WTC11 (cell line): ENCODE measurements at regions of chr6 and their contacts with region 1.

Region 1: DNA sequence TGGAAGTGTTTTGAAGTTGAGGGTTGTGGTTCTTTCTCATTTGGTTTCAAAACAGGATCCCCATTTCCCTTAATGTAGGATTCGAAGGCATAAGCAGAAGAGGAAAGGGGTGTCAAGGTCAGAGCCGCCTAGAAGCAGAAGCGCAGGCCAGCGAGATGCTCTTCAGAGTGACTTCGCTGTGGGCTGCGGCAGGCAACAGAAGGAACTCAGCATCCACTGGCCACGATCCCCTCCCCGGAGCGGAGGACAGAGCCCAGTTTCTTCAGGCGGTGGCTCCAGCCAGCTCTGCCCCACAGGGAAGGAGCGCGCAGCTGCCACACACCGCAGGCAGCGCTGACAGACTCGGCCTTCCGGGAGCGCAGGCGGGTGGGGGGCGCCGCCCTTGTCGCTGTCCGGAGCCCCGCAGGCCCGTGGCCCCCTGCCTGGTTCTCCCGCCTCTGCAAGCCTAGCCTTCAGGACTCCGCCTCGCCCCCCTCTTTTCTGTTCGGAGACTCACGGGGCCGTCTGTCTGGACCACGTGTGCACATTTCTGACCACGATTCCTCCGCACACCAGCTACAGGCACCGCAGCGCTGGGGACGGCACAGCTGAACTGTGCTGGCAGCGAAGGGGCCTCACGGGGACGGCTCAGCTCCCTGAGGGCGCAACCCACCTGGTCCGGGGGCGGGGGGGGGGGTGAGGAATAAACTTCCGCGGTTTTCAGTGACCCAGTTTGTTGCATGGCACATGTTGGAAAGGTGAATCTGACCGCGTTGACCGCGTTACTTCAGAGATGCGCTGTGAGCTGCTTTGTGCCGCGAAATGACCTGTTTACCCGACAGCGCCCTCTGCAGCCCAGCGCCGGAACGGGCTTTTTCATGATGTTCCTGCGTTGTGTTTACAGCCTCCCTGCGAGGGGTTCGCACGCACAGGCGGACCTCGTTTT is 26.1 kb downstream of the TTLL2 start:
- DNase-seq: peak; percentile 97
- ATAC-seq: peak; percentile 84
- H3K4me3 Mint-ChIP-seq: peak overlapping the region; percentile 67
- H3K27ac Mint-ChIP-seq: no peak overlapping the region
- H3K4me1 Mint-ChIP-seq: peaks cover 21% of the 10 kb centered on the region
- H3K27me3 Mint-ChIP-seq: peaks cover 50% of the 10 kb centered on the region
- CTCF ChIP-seq: peak; percentile 86

Region 2: DNA sequence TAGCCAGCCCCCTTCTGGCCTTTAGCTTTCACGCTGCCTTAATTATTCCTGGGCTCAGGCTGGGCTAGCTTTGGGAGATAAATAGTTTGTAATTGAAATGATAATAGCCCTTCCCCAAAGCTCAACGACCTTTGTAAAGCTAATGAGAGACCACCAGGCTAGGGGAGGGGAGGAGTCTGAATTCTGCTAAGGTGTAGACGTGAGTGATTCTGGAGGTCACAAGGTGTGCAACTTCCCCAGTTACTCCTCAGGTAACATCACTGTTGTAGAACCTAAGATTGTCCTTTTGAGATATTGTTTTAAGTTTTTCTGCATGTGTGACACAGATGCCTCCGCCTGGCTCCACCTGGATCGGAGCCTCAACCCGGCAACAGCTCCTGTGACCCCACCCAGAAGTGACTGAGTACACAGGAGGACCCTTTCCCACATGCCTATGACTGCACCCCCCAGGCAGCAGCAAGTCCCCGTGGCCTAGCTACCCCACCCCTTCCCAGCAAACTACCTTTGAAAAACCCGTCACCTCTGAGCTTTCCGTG is 187.4 kb before region 1 on chr6:
- CTCF ChIA-PET with region 1: interaction called, 10 read pairs
- POLR2A ChIA-PET with region 1: no interaction called
- DNase-seq: peak; percentile 63
- ATAC-seq: peak; percentile 92
- H3K4me3 Mint-ChIP-seq: peak overlapping the region; percentile 47
- H3K27ac Mint-ChIP-seq: peak overlapping the region; percentile 98
- H3K4me1 Mint-ChIP-seq: peaks cover 54% of the 10 kb centered on the region
- H3K27me3 Mint-ChIP-seq: no peaks in the 10 kb centered on the region
- CTCF ChIP-seq: no peak

Region 3: DNA sequence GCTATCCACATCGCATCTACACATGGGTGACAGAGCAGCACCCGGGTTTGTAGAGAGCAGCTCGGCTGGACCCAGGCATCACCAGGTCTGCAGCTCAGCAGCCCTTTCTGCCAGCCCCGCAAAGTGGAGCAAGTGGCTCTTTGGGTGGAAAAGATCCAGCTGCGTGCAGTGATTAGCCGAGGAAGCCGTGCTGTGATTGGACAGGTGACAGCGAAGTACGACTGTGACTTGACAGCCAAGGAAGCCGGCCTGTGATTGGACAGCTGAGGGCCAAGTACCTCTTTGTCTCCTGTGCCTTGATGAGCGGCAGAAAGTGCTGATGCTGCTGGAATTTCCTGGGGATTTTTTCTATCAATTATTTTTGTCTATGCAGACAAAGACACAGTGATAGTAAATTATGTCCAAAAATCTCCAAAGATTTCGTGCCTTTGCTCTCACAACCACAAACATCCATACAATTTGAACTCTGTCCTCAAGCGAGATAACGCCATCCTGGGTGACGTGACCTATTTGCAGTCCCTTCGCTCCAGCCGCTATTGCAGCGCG is 131.0 kb before region 1 on chr6:
- CTCF ChIA-PET with region 1: interaction called, 10 read pairs
- POLR2A ChIA-PET with region 1: no interaction called
- DNase-seq: no peak
- ATAC-seq: no peak
- H3K4me3 Mint-ChIP-seq: no peak overlapping the region
- H3K27ac Mint-ChIP-seq: no peak overlapping the region
- H3K4me1 Mint-ChIP-seq: peaks cover 43% of the 10 kb centered on the region
- H3K27me3 Mint-ChIP-seq: peaks cover 24% of the 10 kb centered on the region
- CTCF ChIP-seq: no peak

Region 4: DNA sequence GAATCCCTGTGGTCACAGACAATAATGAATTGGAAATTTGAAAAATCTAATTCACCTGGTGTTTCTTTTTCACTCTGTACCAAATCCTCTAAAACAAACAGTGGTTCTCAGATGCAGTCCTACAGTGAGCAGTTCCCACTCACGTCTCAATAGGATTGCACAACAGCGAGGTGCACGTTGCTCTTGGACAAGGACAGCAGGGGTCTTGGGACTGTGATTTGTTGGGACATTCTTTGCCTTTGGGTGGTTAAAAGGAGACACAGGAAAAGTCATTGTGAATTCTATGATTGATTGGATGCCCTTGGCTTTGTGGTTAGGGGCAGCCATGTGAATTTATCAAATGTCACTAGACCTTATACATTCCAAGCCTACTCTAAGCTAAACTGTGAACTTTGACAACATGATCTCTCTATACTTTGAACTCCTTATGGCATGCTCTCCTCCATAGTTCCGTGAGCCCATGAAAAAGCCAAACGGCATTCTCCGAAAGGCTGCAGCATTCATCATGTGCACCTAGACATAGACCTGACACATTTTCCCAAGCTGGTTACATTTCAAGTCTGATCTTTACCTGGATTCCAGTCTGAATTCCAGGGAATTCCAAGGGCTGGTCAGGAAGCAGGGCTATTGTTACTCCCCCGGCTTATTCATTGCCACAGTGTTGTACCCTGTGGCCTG is 59.2 kb before region 1 on chr6:
- CTCF ChIA-PET with region 1: interaction called, 17 read pairs
- POLR2A ChIA-PET with region 1: no interaction called
- DNase-seq: no peak
- ATAC-seq: no peak
- H3K4me3 Mint-ChIP-seq: no peak overlapping the region
- H3K27ac Mint-ChIP-seq: no peak overlapping the region
- H3K4me1 Mint-ChIP-seq: peaks cover 21% of the 10 kb centered on the region
- H3K27me3 Mint-ChIP-seq: no peaks in the 10 kb centered on the region; the same call in none of the 2 replicates
- CTCF ChIP-seq: no peak

Region 5: DNA sequence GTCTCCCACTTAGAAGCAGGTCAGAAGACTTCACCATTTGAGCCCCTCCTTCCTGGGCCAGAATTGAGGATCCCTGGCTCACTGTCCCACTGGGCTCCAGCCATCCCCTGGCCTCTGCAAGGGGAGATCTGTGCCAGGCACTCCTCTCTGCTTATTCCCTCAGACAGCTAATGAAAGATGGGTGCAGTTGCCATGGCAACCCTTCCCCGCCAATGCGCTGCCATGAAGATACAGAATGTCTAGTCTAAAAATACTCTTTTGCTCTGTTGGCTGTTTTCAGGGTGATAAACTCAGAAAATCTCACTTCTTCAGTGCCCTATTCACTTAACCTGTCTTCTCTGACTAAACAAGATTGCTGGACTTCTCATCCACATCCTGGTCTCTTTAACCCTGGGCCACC is 39.7 kb before region 1 on chr6:
- CTCF ChIA-PET with region 1: interaction called, 11 read pairs
- POLR2A ChIA-PET with region 1: no interaction called
- DNase-seq: no peak
- ATAC-seq: no peak
- H3K4me3 Mint-ChIP-seq: no peak overlapping the region
- H3K27ac Mint-ChIP-seq: no peak overlapping the region; the same call in 1 of the 2 replicates
- H3K4me1 Mint-ChIP-seq: peaks cover 29% of the 10 kb centered on the region
- H3K27me3 Mint-ChIP-seq: peaks cover 13% of the 10 kb centered on the region; the same call in 1 of the 2 replicates
- CTCF ChIP-seq: no peak

Region 6: DNA sequence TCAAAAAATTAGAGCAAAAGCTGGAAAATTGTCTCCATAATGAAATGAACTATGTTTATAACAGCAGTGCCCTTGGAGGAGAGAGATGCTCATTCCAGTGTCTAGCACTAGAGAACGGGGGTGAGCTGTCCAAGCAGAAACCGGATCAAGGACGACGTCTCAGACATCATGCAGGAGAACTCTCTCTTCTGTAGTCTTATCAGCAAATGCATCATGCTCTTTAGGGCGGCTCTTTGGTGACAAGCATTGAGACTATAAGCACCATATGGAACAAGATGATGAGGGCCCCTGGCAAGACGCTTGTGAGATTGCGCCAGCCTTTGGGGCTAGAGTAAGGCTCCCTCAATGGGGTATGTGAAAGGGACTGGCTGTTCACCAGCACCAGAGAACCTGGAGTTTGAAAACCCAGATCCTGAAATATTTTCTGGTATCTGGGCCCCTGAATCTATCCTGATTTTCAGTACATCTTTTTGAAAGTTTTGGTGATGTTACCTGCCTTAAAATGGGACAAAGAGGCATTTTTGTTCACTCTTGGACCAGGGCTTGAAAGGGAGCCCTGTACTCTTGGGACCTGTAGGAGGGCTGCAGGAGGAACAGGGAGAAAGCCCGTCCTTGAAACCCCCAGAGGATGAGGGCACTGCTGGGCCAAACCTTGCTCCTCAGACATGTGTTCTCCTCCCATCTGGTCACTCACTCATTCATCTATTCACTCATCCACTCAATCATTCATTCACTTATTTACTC is 101.5 kb after region 1 on chr6:
- CTCF ChIA-PET with region 1: interaction called, 12 read pairs
- POLR2A ChIA-PET with region 1: no interaction called
- DNase-seq: no peak
- ATAC-seq: no peak
- H3K4me3 Mint-ChIP-seq: no peak overlapping the region
- H3K27ac Mint-ChIP-seq: no peak overlapping the region
- H3K4me1 Mint-ChIP-seq: peaks cover 7% of the 10 kb centered on the region
- H3K27me3 Mint-ChIP-seq: no peaks in the 10 kb centered on the region
- CTCF ChIP-seq: no peak